Activated CD4-positive, alpha-beta memory T cell treated with anti-CD3 and anti-CD28 coated beads, Interleukin-2, amount 10 ng/mL, durations not matched to agents 7 days and 5 days (primary cell): ENCODE measurements at regions of chr18 and their contacts with region 1.

Region 1: DNA sequence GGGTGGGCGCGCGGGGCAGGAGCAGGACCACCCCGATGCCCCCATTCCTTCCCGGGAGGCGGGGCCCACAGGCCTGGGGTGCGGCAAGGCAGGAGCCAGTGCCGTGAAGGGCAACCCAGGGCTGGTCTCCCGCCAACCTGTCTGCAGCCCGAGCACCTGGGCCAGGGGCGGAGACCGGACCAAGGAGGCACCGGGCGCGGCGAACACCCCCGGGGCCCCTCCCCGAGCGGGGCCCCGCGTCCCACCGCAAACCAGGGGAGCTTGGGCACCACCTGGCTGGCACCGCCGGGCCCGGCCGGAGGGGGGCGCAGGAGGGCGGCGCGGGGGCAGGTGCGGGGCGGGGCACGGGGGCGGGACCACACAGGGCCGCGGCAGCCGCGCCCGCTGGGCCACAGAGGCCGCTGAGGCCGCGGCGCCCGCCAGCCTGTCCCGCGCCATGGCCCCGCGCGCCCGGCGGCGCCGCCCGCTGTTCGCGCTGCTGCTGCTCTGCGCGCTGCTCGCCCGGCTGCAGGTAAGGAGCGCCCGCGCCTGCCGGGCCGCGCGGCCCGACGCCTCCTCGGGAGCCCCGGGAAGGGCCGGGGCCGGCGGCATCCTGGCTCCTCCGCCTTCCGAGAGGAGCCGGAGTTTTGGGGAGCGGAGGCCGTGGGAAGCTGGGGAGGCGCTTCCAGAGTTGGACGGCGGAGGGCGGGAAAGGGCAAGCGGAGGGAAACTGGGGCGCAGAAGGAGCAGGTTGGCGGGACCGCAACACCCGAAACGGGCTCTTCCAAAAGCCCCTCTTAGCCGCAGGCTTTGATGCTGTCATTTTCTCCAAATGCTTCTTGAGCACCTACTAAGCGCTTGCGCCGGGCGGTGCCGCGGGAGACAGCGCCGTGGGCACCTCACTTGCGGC is at the start of gene TNFRSF11A:
- DNase-seq: peak; percentile 81
- H3K4me3 Mint-ChIP-seq: peak within 1 kb of the TSS; percentile 93
- H3K27ac Mint-ChIP-seq: peak within 1 kb of the TSS; percentile 45
- H3K4me1 Mint-ChIP-seq: peaks cover 54% of the 10 kb centered on the region
- H3K27me3 Mint-ChIP-seq: peaks cover 49% of the 10 kb centered on the region
- total RNA-seq, gene TNFRSF11A: 26.0 to 30.0 TPM

Region 2: DNA sequence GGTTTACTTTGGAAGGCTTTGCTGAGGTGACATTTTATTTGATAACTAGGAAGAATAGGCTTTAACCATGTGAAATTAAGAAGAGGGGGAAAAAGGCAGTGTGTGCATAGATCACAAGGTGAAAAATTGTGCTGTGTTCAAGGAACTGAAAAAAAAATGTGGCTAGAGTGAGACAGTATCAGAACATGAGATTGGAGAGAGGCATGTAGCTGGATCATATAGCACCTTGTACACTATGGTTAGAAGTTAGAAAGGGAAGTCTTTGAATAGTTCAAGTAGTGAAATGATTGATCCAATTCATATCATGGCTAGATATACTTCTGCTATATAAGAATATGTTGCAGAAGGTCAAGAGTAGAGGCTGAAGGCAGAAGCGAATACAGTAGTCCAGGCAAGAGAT is 12.3 kb before region 1 on chr18:
- CTCF ChIA-PET with region 1: interaction called, 18 read pairs
- POLR2A ChIA-PET with region 1: interaction called, 6 read pairs
- DNase-seq: no peak
- H3K4me3 Mint-ChIP-seq: no peak overlapping the region
- H3K27ac Mint-ChIP-seq: no peak overlapping the region
- H3K4me1 Mint-ChIP-seq: no peaks in the 10 kb centered on the region
- H3K27me3 Mint-ChIP-seq: peaks cover 7% of the 10 kb centered on the region

Region 3: DNA sequence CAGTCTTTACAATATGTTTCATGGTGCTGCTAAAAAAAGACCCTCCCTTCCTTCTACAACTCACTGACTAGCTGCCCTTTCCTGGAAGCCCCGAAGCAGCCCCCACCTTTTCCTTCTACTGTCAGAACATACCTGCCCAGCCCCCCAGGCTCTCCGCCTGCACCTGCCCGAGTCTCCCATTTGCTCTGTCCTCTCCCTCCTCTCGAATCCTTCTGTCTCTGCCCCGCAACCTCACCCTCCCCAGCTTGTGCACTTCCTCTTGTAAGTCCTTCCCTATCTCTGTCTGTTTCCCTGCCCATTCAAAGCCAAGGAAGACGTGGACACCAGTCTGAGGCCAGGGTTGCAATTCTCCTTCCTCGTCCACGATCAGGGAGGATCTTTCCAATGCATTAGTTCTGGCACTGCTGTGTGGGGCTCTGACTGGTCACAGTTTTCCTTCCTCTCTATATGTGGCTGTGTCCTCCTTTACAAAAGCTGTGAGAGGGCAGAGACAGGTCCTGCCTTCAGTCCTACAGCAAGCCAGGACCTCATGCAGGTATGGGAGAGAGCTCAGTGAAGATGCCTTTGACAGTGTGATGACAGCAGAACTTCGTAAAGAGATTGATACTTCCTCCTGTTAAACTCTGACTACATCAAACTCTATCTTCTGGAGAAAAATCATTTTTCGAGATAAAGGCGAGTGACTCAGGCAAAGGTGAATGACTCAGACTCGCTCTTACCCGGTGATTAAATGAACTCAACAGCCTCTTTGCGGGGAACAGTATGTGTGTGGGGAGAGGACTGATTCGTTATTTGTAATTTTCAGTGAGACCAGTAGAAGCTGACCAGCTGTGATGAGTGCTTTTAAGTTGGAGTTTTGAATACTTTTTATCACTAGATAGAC is 14.2 kb after region 1 on chr18:
- CTCF ChIA-PET with region 1: interaction called, 6 read pairs
- POLR2A ChIA-PET with region 1: interaction called, 18 read pairs
- DNase-seq: peak; percentile 45
- H3K4me3 Mint-ChIP-seq: peak overlapping the region; percentile 46
- H3K27ac Mint-ChIP-seq: peak overlapping the region; percentile 84
- H3K4me1 Mint-ChIP-seq: peaks cover 59% of the 10 kb centered on the region
- H3K27me3 Mint-ChIP-seq: no peaks in the 10 kb centered on the region